Transverse colon (tissue), 4 donors: ENCODE measurements at regions of chr9 and their contacts with region 1.

Region 1: DNA sequence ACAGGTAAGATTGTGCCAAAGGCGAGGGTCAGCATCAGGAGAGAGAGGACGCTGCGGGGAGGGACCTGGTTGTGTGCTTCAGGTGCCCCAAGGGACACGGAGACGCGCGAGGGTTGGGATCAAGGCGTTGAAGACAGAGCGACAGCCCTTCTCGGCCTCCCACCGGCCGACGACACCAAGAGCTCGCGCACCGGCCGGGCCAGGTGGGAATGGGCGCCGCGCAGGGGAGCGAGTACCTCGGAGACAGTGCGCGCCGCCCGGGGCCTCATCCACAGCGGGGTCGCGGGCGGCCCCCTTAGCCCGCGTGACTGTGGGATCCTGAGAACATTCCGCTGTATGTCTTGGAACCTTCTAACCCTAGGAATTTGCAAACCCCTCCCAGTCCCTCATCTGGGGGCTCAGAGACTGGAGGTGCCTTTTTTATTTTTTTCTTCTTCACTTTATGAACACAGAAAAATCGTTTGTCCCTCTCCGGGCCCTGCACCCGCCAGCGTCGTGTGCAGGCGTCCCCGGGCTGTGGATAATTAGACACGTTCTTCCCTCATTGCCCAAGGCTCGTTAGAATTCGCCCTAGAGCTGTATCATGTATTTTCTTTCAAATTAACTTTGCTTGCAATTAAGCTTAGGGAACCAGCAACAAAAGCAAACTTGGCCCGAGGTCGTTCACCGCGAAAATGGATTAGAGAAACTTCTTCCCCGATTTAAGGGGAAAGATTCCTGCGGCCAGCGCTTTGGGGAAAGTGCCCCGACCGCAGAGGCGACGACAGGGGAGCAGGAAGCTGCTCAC is 4.8 kb downstream of the FOXE1 start:
- DNase-seq: no peak
- H3K4me3 ChIP-seq: no peak overlapping the region
- H3K27ac ChIP-seq: no peak overlapping the region
- H3K4me1 ChIP-seq: peaks cover 4 to 18% (median 12%) of the 10 kb centered on the region in 4 donors
- H3K27me3 ChIP-seq: peaks cover 98% of the 10 kb centered on the region
- CTCF ChIP-seq: no peak
- EP300 ChIP-seq: no peak
- POLR2A ChIP-seq: no peak

Region 2: DNA sequence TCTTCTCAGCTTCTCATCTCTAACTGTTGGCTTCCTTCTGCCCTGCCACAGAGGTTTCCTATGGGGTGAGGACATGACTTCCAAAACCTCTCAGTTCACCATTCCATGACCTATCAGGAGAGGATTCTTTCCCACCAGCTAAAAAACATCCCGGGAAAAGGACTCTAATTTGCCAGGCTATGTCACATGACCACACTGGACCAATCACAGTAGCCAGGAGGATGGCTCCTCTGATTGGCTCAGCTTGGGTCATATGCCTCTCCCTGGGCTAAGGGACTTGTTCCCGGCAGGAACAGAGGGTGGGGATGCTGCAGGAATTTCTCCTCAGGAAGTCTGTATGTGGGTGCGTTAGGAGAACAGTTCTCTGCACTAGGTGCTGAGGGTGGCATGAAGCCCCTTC is 120.4 kb before region 1 on chr9:
- in situ Hi-C with region 1: no loop called
- intact Hi-C with region 1: loop called (anchors 5 kb)
- DNase-seq: no peak
- H3K4me3 ChIP-seq: no peak overlapping the region
- H3K27ac ChIP-seq: no peak overlapping the region
- H3K4me1 ChIP-seq: peaks cover 0 to 11% (median 10%) of the 10 kb centered on the region in 4 donors
- H3K27me3 ChIP-seq: peaks cover 52% of the 10 kb centered on the region
- CTCF ChIP-seq: no peak
- EP300 ChIP-seq: no peak
- POLR2A ChIP-seq: no peak